ENCODE measurements at regions of chr13 and their contacts with region 1.

Region 1: DNA sequence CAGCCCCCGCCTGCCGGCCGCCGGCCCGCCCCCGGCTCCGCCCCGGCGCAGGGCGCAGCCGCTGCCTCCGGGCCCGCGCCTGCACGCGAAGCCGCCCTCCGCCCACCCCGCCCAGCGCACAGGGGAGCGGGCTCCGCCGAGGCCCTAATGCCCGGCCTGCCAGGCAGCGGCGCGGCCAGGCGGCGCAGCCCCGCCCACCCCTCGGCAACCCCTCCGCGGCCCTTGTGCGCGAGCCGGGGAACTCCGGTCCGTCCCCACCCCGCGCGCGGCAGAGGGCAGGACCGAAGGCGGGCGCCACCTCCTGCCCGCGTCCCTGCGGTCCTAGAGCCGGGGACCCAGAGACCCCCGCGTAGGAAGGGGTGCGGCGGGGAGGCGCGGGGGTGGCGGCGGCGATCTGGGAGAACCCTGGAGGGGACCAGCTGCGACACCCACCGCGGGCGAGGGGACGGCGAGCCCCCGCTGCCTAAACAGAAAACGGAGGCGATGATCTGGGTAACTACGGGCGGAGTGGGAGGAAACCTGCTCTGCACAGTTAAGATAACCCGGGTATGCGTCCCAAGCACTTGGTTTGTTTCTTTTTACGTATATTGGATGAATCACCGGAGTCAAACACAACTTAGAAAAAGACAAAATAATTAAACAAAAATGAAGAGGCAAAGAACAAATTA is 350 bp upstream of the USP12 start:
- DNase-seq: peak; percentile 92
- H3K4me3 ChIP-seq: peak overlapping the region; percentile 74 to 86 (median 80)
- H3K27ac ChIP-seq: peak overlapping the region; percentile 88
- H3K4me1 ChIP-seq: peaks cover 38% of the 10 kb centered on the region
- H3K27me3 ChIP-seq: no peaks in the 10 kb centered on the region
- CTCF ChIP-seq: no peak
- POLR2A ChIP-seq: no peak

Region 2: DNA sequence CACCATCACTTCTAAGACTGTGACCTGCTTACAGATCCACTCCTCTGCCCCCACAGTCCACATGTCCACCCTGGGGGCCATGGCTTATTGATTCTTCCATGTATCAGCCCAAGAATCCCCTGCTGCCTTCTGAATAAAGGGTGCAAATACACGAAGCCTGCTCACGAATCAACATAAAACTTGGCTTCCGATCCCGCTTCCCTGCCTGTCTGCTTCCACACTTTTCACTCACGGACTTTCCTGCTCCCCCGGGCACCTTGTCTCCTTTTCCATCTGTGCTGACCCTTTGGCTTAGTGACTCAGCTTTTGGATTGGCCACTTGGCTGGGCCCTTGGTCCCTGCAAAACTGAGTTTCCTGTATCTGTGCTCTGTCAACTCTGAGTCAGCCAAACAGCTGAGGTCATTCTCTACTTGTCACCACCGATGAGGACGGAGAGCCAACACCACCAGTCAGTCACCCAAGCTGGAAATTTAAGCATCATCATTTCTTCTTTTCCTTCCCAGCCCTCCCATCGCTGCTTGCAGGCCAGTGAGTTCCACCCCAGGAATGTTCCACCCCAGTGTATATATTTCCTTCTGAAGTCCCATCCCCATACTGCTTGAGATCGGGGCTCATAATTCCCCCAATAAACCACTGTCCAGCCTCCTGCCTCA is 11.0 kb after region 1 on chr13:
- CTCF ChIA-PET with region 1: interaction called, 4 read pairs
- POLR2A ChIA-PET with region 1: no interaction called
- dilution Hi-C with region 1: no loop called
- intact Hi-C with region 1: loop called (anchors 1 kb)
- DNase-seq: peak; percentile 89
- H3K4me3 ChIP-seq: peak overlapping the region in 1 of 3 experiments; percentile 27
- H3K27ac ChIP-seq: peak overlapping the region; percentile 88
- H3K4me1 ChIP-seq: peaks cover 20% of the 10 kb centered on the region
- H3K27me3 ChIP-seq: no peaks in the 10 kb centered on the region
- CTCF ChIP-seq: no peak
- POLR2A ChIP-seq: peak; percentile 46

Region 3: GRCh38 chr13:27251166-27252091 is 79.5 kb after region 1 on chr13 and contains the start of gene RPL21:
- CTCF ChIA-PET with region 1: interaction called, 5 read pairs
- POLR2A ChIA-PET with region 1: interaction called, 3 read pairs
- dilution Hi-C with region 1: no loop called
- intact Hi-C with region 1: loop called (anchors 1 kb)
- DNase-seq: peak; percentile 98
- H3K4me3 ChIP-seq: peak within 1 kb of the TSS; percentile 70 to 100 (median 96)
- H3K27ac ChIP-seq: peak within 1 kb of the TSS; percentile 94
- H3K4me1 ChIP-seq: peaks cover 19% of the 10 kb centered on the region
- H3K27me3 ChIP-seq: no peaks in the 10 kb centered on the region
- CTCF ChIP-seq: no peak
- POLR2A ChIP-seq: peak; percentile 92
- total RNA-seq, gene RPL21: 871 and 890 TPM in 2 replicates